ENCODE measurements at regions of chr19 and their contacts with region 1.

Region 1: GRCh38 chr19:41928221-41928683 is at the start of gene ERFL:
- DNase-seq: peak in 1 of 10 donors; percentile 34
- ATAC-seq: peak; percentile 37 to 47
- H3K4me3 Mint-ChIP-seq: peak within 1 kb of the TSS in 7 of 10 donors; percentile 86 to 97 (median 94)
- H3K27ac Mint-ChIP-seq: peak within 1 kb of the TSS in 9 of 10 donors; percentile 83 to 94 (median 91)
- H3K4me1 Mint-ChIP-seq: peaks cover 24 to 43% (median 37%) of the 10 kb centered on the region in 4 donors
- H3K27me3 Mint-ChIP-seq: peaks cover 0 to 5% (median 0%) of the 10 kb centered on the region in 5 donors
- polyA plus RNA-seq, gene ERFL: not detected

Region 2: DNA sequence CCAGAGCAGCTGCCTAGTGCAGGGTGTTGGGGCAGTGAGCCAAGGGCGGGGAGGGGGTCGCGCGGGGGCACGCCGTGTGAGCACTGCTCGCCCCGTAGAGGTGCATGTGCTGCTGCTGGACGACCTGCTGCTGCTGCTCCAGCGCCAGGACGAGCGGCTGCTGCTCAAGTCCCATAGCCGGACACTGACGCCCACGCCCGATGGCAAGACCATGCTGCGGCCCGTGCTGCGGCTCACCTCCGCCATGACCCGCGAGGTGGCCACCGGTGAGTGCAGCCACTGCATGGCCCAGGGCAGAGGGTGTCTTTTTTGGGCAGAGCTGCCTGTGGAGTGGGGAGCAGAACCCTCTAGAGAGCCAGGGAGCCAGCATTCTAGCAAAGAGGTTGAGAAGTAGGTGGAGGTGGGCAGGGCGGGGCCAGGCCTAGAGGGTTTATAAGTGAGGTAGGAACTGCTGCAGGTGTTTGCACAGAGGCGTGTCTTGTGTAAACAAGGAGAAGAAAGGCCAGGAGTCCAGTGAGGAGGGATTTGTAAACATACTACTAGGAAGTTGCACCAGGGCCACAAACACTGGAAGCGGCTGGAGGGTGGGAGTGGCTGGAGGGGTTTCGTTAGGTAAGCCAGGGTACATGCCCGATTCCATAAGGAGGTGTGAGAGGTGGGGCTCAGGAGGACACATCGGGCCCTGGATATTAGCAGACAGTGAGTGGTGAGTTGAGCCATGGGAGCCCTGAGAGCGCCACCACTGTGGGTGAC is 24.0 kb before region 1 on chr19:
- POLR2A ChIA-PET with region 1: interaction called, 51 read pairs
- DNase-seq: no peak
- ATAC-seq: no peak
- H3K4me3 Mint-ChIP-seq: peak overlapping the region in 4 of 10 donors; percentile 5 to 39 (median 31)
- H3K27ac Mint-ChIP-seq: peak overlapping the region in 9 of 10 donors; percentile 57 to 85 (median 81)
- H3K4me1 Mint-ChIP-seq: peaks cover 23 to 70% (median 53%) of the 10 kb centered on the region in 4 donors
- H3K27me3 Mint-ChIP-seq: no peaks in the 10 kb centered on the region

Measured in naive thymus-derived CD8-positive, alpha-beta T cell (primary cell).